AG04450 (cell line): ENCODE measurements at regions of chr3 and their contacts with region 1.

Region 1: DNA sequence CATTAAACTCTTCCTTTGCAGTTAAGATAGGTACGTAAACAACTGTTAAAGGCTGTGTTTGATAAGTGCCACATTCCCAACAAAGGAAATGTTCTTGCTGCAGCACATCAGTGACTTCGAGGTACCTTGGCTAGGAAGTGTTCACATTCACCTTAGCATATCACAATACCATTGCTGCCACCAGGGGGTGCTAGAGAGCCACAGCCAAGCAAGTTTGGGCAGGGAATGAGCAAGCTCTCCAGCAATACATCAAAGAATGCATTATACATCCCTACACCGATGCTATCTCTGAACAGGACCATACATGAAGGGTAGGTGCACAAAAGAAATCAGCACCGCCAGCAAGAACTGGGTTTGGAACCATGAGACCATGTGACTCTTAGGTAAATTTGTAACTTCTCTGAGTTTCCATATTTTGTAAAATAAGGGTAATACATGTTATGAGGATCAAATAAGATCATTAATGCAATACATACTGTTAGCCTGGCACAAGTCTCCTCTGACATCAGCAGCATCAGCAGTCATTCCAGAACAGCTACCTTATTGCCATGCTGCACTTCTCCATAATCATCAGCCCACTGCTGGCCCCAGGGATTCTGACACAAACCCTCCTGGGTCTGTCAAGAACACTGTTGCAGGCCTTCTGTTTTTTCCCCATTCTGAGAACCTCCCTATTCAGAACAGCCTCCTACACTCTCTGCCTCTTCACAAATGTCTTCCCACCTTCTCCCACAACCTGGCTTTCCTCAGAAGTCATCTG is 37.6 kb downstream of the RYK start:
- DNase-seq: no peak
- H3K4me3 ChIP-seq: no peak overlapping the region
- H3K27ac ChIP-seq: no peak overlapping the region
- H3K27me3 ChIP-seq: no peaks in the 10 kb centered on the region
- CTCF ChIP-seq: peak; percentile 99

Region 2: GRCh38 chr3:133927540-133928066 is 285.5 kb before region 1 on chr3:
- CTCF ChIA-PET with region 1: interaction called, 227 read pairs
- POLR2A ChIA-PET with region 1: no interaction called
- DNase-seq: no peak
- H3K4me3 ChIP-seq: peak overlapping the region; percentile 56
- H3K27ac ChIP-seq: no peak overlapping the region
- H3K27me3 ChIP-seq: no peaks in the 10 kb centered on the region
- CTCF ChIP-seq: peak; percentile 55

Region 3: GRCh38 chr3:134190250-134190649 is 22.8 kb before region 1 on chr3:
- CTCF ChIA-PET with region 1: interaction called, 188 read pairs
- POLR2A ChIA-PET with region 1: no interaction called
- DNase-seq: no peak
- H3K4me3 ChIP-seq: no peak overlapping the region
- H3K27ac ChIP-seq: no peak overlapping the region
- H3K27me3 ChIP-seq: no peaks in the 10 kb centered on the region
- CTCF ChIP-seq: peak; percentile 19

Region 4: GRCh38 chr3:134239538-134239937 is 26.5 kb after region 1 on chr3:
- CTCF ChIA-PET with region 1: interaction called, 90 read pairs
- POLR2A ChIA-PET with region 1: no interaction called
- DNase-seq: no peak
- H3K4me3 ChIP-seq: no peak overlapping the region
- H3K27ac ChIP-seq: no peak overlapping the region
- H3K27me3 ChIP-seq: no peaks in the 10 kb centered on the region
- CTCF ChIP-seq: no peak

Region 5: GRCh38 chr3:134299185-134299887 is 86.2 kb after region 1 on chr3:
- CTCF ChIA-PET with region 1: interaction called, 145 read pairs
- POLR2A ChIA-PET with region 1: no interaction called
- DNase-seq: no peak
- H3K4me3 ChIP-seq: no peak overlapping the region
- H3K27ac ChIP-seq: no peak overlapping the region
- H3K27me3 ChIP-seq: no peaks in the 10 kb centered on the region
- CTCF ChIP-seq: peak; percentile 55

Region 6: GRCh38 chr3:134485718-134486576 is 272.9 kb after region 1 on chr3 and contains the starts of genes ANAPC13 and CEP63:
- CTCF ChIA-PET with region 1: interaction called, 142 read pairs
- POLR2A ChIA-PET with region 1: no interaction called
- DNase-seq: peak; percentile 98
- H3K4me3 ChIP-seq: peak within 1 kb of the TSS; percentile 87
- H3K27ac ChIP-seq: peak within 1 kb of the TSS; percentile 97
- H3K27me3 ChIP-seq: no peaks in the 10 kb centered on the region
- CTCF ChIP-seq: no peak
- polyA plus RNA-seq, gene ANAPC13: 122 and 176 TPM in 2 replicates
- polyA plus RNA-seq, gene CEP63: 11.0 and 16.3 TPM in 2 replicates